Activated CD8-positive, alpha-beta T cell treated with anti-CD3 and anti-CD28 coated beads for 36 hours (primary cell): ENCODE measurements at regions of chr1 and their contacts with region 1.

Region 1: GRCh38 chr1:201042779-201043461 is 19.4 kb upstream of the KIF21B start:
- DNase-seq: peak; percentile 86
- ATAC-seq: peak; percentile 97
- H3K4me3 Mint-ChIP-seq: no peak overlapping the region
- H3K27ac Mint-ChIP-seq: no peak overlapping the region
- H3K4me1 Mint-ChIP-seq: peaks cover 2% of the 10 kb centered on the region
- H3K27me3 Mint-ChIP-seq: no peaks in the 10 kb centered on the region
- CTCF ChIP-seq: peak; percentile 77

Region 2: DNA sequence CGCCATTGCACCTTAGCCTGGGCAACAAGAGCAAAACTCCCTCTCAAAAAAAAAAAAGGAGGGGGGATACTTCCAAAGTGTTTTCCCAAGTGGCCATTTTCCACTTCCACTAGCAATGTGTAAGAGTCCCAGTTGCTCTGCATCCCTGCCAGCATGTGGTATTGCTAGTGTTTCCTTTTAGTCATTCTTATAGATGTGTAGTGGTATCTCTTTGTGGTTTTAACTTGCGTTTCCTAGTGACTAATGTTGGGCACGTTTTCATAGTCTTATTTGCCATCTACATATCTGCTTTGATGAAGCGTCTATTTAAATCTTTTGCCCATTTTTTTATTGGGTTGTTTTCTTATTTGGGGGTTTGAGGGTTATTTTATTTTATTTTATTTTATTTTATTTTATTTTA is 117.1 kb before region 1 on chr1:
- CTCF ChIA-PET with region 1: no interaction called
- POLR2A ChIA-PET with region 1: no interaction called
- intact Hi-C with region 1: no loop called
- DNase-seq: peak; percentile 45
- ATAC-seq: peak; percentile 84
- H3K4me3 Mint-ChIP-seq: no peak overlapping the region
- H3K27ac Mint-ChIP-seq: no peak overlapping the region
- H3K4me1 Mint-ChIP-seq: peaks cover 7% of the 10 kb centered on the region
- H3K27me3 Mint-ChIP-seq: peaks cover 4% of the 10 kb centered on the region
- CTCF ChIP-seq: no peak

Region 3: DNA sequence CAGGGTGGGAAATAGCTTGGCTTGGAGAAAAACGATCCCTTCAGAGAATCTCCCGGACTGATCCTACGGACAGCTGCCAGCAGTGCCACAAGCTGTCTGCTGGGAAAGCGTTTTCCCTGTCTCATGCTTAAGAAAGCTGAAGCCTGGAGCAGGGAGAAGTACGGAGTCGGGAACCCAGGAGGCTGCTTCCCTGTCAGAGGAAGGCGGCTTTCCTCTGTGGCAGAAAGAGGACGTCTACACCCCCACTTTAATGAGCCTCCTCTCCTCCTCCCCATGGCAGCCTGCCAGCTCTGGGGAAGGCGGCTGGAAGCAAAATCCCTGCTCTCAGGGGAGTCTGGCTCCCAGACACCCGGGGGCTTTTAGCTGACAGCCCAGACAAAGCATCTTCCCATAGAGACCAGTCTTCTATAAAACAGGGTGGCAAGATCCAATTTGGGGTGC is 26.7 kb before region 1 on chr1:
- CTCF ChIA-PET with region 1: interaction called, 74 read pairs
- POLR2A ChIA-PET with region 1: no interaction called
- intact Hi-C with region 1: no loop called
- DNase-seq: no peak
- ATAC-seq: no peak
- H3K4me3 Mint-ChIP-seq: peak overlapping the region; percentile 68
- H3K27ac Mint-ChIP-seq: peak overlapping the region; percentile 97
- H3K4me1 Mint-ChIP-seq: peaks cover 92% of the 10 kb centered on the region
- H3K27me3 Mint-ChIP-seq: no peaks in the 10 kb centered on the region
- CTCF ChIP-seq: no peak